Right ventricle myocardium inferior (tissue), 1 donor: ENCODE measurements at regions of chr22 and their contacts with region 1.

Region 1: GRCh38 chr22:40036591-40037225 is 42.0 kb downstream of the FAM83F start:
- DNase-seq: no peak
- ATAC-seq: peak; percentile 67

Region 2: DNA sequence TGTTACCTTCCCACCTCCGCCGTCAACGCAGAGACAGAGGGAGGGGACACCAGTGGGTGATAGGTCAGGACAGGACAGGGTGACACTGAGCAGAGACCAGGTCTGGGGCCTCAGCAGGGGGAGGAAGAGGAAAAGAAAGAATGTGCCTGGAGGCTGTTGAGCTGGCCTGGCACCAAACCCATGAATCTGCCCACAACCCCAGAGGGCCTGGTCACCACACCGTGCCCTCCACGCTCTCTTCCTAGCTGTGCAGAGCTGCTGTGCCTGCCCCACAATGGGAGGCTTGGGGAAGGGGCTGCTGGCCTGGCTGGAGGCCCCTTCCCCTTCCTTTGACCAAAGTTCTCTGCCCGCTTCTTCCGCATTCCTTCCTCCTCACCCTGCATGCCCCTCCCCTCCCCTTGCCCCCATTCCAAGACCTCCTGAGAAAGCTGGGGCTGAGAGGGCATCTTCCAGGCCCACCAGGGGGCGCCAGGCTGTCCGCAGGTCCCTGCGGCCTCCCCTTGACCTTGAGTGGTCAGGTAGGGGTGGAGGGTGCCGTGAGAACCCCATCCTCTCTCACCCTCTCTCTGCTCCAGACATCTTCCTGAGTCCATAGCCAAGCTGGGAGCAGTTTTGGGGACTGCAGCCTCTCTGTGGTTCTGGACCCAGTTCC is 477.1 kb before region 1 on chr22:
- intact Hi-C with region 1: loop called (anchors 5 kb)
- DNase-seq: peak; percentile 17
- ATAC-seq: peak; percentile 11

Region 3: DNA sequence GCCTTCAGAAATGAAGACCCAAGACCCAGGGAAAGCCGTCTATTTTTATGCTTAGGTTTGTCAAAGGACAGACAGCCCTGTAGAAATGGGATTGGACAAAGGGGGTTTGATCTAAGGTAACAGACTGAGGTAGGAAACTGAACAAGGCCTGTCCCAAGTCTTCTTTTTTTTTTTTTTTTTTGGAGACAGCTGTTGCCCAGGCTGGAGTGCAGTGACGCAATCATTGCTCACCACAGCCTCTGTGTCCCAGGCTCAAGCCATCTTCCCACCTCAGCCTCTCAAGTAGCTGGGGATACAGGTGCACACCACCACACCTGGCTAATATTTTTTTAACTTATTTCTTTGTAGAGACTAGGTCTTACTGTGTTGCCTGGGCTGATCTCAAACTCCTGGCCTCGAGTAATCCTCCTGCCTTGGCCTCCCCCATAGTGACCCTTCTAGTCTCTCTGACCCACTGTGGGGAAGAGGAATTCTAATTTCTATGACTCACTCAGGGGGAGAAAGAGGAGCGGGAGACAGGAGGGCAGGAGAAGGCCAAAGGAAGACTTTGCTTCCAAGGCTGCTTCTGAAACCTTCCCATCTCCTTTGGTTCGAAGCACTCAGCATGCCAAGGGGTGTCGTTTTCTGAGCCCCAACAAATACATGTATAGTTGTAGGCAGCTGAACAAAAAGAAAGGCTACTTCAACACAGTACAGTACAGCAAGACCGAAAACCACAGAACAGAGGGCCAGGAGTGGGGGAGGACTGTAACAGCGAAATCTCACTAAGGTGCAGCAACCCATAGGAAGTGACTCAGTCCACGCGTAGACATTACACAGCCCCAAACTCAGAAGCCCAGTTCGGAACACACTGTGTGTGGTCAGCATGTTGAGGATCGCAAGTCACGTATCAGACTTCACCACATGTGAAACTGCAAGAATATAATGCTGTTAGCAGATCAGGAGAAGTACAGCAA is 75.6 kb before region 1 on chr22:
- intact Hi-C with region 1: no loop called
- DNase-seq: no peak
- ATAC-seq: peak; percentile 50

Region 4: GRCh38 chr22:40076702-40077645 is 40.3 kb after region 1 on chr22:
- intact Hi-C with region 1: no loop called
- DNase-seq: no peak
- ATAC-seq: no peak